MCF 10A (cell line): ENCODE measurements at regions of chr6 and their contacts with region 1.

Region 1: GRCh38 chr6:136840276-136841001 is 18.0 kb downstream of the PEX7 start:
- DNase-seq: no peak
- H3K4me3 Mint-ChIP-seq: no peak overlapping the region
- H3K27ac Mint-ChIP-seq: no peak overlapping the region
- H3K4me1 Mint-ChIP-seq: peaks cover 9% of the 10 kb centered on the region
- H3K27me3 Mint-ChIP-seq: no peaks in the 10 kb centered on the region
- CTCF ChIP-seq: no peak

Region 2: DNA sequence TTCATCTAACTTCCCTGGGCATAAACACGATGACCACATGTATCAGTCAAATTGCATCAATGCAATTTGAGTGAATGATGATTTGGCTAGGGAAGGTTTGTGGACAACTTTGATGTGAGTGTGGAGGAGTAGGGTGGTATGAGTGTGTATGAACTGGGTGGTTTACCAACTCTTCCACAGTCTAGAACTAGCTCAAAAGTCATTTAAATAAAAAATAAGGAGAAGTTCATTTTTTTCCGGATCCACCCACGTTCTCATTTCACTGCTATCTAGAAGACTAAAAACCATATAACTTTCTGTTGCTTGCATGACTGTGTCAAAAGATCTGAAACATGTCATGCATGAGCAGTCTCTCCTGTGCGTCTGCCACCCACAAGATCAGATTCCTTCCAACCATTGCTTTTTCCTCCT is 105.3 kb after region 1 on chr6:
- CTCF ChIA-PET with region 1: no interaction called
- POLR2A ChIA-PET with region 1: no interaction called
- intact Hi-C with region 1: loop called (anchors 5 kb)
- DNase-seq: no peak
- H3K4me3 Mint-ChIP-seq: no peak overlapping the region
- H3K27ac Mint-ChIP-seq: no peak overlapping the region
- H3K4me1 Mint-ChIP-seq: no peaks in the 10 kb centered on the region
- H3K27me3 Mint-ChIP-seq: no peaks in the 10 kb centered on the region
- CTCF ChIP-seq: no peak

Region 3: GRCh38 chr6:136977075-136977474 is 136.6 kb after region 1 on chr6:
- CTCF ChIA-PET with region 1: no interaction called
- POLR2A ChIA-PET with region 1: no interaction called
- intact Hi-C with region 1: no loop called
- DNase-seq: no peak
- H3K4me3 Mint-ChIP-seq: no peak overlapping the region
- H3K27ac Mint-ChIP-seq: no peak overlapping the region
- H3K4me1 Mint-ChIP-seq: no peaks in the 10 kb centered on the region
- H3K27me3 Mint-ChIP-seq: no peaks in the 10 kb centered on the region
- CTCF ChIP-seq: no peak